ENCODE measurements at regions of chr12 and their contacts with region 1.

Region 1: GRCh38 chr12:52884526-52885293 is 20.2 kb downstream of the KRT8 start:
- DNase-seq: no peak
- H3K4me3 ChIP-seq: no peak overlapping the region
- CTCF ChIP-seq: peak; percentile 92

Region 2: DNA sequence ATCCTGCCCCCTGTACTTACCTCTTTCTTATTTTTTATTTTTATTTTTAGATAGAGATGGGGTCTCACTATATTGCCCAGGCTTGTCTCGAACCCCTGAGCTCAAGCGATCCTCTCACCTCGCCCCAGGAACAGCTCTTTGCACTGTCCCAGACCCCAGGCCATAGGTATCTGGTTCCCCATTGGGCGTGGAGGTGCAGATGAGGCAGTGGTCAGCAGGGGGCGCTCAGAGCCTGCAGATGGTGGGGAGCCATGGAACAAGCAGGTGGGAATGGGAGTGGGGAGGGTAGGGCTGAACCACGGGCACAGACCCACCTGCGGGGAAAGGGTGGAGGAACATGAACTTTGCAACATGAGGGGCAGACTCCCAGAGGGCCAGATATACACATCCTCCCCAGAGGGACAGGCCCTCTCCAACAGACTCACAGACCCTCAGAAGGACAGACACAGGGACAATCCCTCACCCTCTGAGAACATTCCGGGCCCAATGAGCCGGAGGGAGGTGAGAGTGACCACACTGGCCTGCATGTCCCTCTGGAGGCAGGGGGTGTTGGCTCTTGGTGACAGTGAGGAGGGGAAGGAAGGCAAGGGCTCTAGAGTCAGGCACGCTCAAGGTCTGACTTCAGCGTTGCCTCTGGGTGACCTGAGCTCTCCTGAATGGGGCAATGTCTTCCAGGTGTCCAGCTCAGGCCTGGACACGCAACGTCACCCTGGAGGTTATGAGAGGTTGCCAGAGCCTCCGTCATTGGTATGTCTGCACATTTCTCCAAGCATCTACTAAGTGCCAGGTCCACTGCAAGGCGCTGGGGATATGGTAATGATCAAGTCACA is 727.8 kb before region 1 on chr12:
- CTCF ChIA-PET with region 1: interaction called, 78 read pairs
- POLR2A ChIA-PET with region 1: no interaction called
- DNase-seq: no peak
- H3K4me3 ChIP-seq: no peak overlapping the region
- CTCF ChIP-seq: peak; percentile 97

Region 3: DNA sequence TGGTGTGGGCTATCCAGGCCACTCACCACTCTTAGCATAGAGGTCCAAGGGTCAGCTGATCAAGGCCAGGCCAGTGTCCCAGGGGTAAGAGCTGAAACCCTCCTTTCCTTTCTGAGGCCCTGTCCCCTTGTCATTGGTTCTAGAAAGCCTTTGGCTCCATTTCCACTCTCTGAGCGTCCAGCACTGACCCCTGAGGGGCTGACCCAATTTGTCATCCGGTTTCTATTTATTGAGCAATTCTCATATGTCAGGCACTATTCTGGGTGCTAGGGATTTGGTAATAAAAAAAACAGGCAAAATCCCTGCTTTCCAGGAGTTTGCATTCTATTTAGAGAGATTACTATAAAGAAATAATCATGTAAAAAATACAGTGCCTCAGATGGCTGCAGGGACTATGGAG is 184.8 kb before region 1 on chr12:
- CTCF ChIA-PET with region 1: no interaction called
- POLR2A ChIA-PET with region 1: no interaction called
- DNase-seq: no peak
- H3K4me3 ChIP-seq: no peak overlapping the region
- CTCF ChIP-seq: no peak

Region 4: DNA sequence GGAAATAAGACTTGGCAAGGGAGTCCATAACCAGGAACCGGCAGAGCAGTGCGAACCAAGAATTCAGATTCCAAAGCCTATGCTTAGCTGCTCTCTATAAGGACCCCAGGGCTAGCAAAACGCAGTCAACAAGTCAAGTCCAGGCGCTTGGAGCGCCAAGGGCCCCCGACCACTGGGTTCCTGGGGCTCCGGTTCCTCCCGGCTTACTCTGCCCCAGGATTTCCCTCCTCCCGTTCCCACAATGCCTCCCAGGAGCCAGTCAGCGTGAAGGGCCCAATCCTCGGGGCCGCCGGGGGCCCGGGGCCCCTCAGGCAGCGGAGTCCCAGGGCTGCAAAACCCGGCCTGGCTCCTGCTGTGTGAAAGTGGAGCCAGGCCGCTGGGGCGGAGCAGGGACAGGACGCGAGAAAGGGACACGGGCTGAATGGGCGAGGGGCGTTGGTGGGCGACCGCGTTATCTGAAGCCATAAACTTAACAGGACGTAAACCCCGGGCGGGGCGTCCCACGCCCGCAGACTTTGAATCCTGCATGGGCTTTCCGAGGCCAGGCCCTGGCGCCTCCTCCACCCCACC is 18.7 kb after region 1 on chr12:
- CTCF ChIA-PET with region 1: interaction called, 194 read pairs
- POLR2A ChIA-PET with region 1: no interaction called
- DNase-seq: no peak
- H3K4me3 ChIP-seq: peak overlapping the region; percentile 30
- CTCF ChIP-seq: no peak

Region 5: DNA sequence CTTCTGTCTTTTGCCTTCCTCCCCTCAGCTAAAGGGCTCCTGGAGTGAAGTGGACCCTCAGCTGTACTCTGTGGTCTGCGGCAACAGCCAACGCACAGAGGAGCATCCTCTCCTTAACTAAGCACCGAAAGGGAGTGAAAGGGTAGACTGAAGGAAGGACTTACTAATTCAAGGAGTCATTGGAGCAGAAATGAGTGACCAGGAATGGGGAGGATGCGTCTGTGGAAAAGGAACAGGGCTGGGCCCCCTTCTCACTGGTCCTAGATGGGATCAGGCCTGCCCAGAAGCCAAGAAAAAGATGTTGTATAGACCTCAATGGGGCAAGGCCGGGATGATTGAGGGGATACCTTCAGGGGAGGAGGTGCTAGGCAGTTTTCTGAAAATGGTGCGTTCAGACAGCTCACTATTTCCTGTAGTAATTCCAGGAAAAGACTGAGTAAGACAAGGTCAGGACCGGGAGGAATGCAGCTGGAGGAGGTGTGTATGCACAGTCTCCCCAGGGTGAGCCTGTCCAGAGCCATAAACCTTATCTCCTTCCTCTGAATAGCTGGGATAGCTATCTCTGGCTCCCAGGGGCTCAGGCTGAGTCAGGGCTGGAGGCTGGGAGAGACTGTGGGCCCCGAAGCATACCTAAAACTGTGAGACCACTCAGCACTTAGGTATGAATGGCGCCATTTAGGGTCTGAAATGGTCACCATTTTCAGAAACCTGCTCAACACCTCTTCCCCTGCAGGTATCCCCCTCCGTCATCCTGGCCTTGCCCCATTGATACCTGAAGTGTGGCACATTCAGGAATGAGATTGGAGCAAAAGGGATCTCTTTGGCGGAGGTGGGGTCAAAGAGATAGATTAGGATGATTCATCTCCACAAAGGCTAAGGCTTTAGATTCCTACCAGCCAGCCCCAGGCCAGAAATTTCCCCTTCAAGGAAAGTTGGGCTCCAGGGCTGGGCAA is 40.3 kb after region 1 on chr12:
- CTCF ChIA-PET with region 1: interaction called, 71 read pairs
- POLR2A ChIA-PET with region 1: no interaction called
- DNase-seq: peak; percentile 86
- H3K4me3 ChIP-seq: no peak overlapping the region
- CTCF ChIP-seq: no peak

Region 6: DNA sequence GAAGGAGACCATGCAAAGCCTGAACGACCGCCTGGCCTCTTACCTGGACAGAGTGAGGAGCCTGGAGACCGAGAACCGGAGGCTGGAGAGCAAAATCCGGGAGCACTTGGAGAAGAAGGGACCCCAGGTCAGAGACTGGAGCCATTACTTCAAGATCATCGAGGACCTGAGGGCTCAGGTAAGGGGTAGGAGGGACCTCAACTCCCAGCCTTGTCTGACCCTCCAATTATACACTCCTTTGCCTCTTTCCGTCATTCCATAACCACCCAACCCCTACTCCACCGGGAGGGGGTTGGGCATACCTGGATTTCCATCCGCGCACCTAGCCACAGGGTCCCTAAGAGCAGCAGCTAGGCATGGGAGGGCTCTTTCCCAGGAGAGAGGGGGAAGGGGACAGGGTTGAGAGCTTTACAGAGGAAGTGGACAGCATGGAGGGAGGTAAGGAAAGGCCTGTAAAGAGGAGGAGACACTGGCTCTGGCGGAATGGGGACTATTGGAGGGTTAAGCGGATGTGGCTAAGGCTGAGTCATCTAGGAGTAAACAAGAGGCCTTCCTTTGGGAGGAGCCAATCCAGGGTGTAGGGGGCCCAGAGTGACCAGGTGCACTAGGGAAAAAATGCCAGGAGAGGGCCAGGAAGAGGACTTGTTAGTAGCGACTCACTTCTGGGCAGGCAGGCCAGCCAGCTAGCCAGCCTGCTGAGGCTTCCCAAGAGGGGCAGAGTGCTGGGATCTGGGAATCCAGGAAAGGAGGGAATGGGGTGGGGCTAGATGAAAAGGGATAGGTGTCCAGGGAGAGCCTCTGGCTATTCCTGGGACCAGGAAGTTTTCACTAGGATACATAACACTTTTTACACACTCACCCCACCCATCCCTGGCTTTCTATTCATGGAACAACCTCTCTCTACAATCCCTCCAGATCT is 65.0 kb after region 1 on chr12:
- CTCF ChIA-PET with region 1: interaction called, 71 read pairs
- POLR2A ChIA-PET with region 1: no interaction called
- DNase-seq: no peak
- H3K4me3 ChIP-seq: peak overlapping the region; percentile 78
- CTCF ChIP-seq: no peak

Region 7: GRCh38 chr12:53005986-53006809 is 121.5 kb after region 1 on chr12 and contains the start of gene EIF4B:
- CTCF ChIA-PET with region 1: interaction called, 22 read pairs
- POLR2A ChIA-PET with region 1: no interaction called
- DNase-seq: peak; percentile 96
- H3K4me3 ChIP-seq: peak within 1 kb of the TSS; percentile 98
- CTCF ChIP-seq: no peak

Measured in AG04449 (cell line).